Calu3 (cell line): ENCODE measurements at regions of chr22 and their contacts with region 1.

Region 1: DNA sequence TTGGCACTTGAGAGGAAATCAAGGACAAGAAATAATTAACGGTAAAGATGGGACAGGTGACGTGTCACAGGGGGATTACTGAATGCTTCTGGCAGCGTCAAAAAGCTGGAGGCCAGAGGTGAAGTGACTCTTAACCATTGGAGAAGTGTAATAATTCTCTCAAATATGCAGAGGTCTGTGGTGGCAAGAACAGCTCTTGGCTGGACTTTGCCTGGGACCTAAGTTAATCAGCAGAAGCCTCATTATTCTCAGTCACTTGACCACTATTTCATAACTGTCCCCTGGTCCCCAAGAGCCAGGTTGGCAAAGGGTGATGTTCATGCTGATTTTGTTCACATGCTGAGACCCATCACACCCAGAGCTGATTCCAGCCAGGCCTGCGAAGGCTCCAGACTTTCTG is 72.9 kb downstream of the TIMP3 start:
- DNase-seq: no peak
- H3K4me3 Mint-ChIP-seq: no peak overlapping the region
- H3K27ac Mint-ChIP-seq: no peak overlapping the region
- H3K4me1 Mint-ChIP-seq: no peaks in the 10 kb centered on the region
- H3K27me3 Mint-ChIP-seq: peaks cover 87% of the 10 kb centered on the region
- CTCF ChIP-seq: no peak

Region 2: GRCh38 chr22:32803020-32803754 is 71.2 kb before region 1 on chr22:
- CTCF ChIA-PET with region 1: interaction called, 12 read pairs
- intact Hi-C with region 1: no loop called
- DNase-seq: no peak
- H3K4me3 Mint-ChIP-seq: peak overlapping the region; percentile 86
- H3K27ac Mint-ChIP-seq: peak overlapping the region; percentile 5
- H3K4me1 Mint-ChIP-seq: peaks cover 14% of the 10 kb centered on the region
- H3K27me3 Mint-ChIP-seq: peaks cover 53% of the 10 kb centered on the region
- CTCF ChIP-seq: no peak

Region 3: DNA sequence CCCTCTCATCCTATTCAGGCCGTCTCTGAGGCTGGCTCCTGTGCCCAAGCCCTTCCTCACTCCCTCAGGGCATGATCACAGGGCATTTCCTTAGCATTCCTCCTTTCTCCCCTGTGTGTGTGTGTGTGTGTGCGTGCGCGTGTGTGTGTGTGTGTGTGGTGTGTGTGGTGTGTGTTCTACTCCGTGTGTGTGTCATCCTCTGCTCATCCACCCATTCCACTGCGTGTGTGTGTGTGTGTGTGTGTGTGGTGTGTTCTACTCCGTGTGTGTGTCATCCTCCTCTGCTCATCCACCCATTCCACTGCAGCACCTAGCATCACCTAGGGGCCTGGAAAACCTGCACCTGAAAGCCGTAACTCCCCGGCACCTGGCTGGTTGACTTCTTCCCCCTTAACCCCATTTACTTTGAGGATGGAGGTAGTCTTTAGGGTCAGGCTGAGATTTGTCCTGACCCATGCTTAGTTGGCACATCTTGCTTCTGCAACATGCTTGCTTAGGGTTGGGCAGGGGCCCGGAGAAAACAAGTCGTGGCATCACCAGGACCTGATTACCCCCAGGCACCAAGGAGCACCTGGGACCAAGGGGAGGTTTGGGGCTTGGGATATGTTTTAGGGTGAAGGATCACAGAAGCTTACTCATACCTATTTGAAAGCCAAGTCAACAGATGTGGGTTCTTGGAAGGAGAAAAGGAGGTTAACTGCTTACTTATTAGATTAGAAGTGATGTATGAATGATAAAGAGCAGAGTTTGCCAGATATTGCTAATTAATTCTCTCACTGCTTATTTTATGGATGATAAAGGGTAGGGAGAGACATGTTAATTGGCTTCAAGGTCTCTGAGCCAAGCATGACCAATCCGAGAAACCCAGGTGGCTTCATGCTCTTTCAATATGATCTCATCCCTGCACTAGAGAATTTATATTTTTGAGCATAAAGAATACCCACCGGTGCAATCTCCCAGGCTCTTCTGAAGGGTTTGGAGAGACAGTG is 54.0 kb before region 1 on chr22:
- CTCF ChIA-PET with region 1: no interaction called
- intact Hi-C with region 1: no loop called
- DNase-seq: no peak
- H3K4me3 Mint-ChIP-seq: no peak overlapping the region
- H3K27ac Mint-ChIP-seq: no peak overlapping the region
- H3K4me1 Mint-ChIP-seq: no peaks in the 10 kb centered on the region
- H3K27me3 Mint-ChIP-seq: no peaks in the 10 kb centered on the region
- CTCF ChIP-seq: no peak

Region 4: GRCh38 chr22:32897400-32897799 is 23.0 kb after region 1 on chr22:
- CTCF ChIA-PET with region 1: no interaction called
- intact Hi-C with region 1: no loop called
- DNase-seq: no peak
- H3K4me3 Mint-ChIP-seq: no peak overlapping the region
- H3K27ac Mint-ChIP-seq: no peak overlapping the region
- H3K4me1 Mint-ChIP-seq: no peaks in the 10 kb centered on the region
- H3K27me3 Mint-ChIP-seq: peaks cover 58% of the 10 kb centered on the region
- CTCF ChIP-seq: no peak